ENCODE measurements at regions of chr20 and their contacts with region 1.

Region 1: DNA sequence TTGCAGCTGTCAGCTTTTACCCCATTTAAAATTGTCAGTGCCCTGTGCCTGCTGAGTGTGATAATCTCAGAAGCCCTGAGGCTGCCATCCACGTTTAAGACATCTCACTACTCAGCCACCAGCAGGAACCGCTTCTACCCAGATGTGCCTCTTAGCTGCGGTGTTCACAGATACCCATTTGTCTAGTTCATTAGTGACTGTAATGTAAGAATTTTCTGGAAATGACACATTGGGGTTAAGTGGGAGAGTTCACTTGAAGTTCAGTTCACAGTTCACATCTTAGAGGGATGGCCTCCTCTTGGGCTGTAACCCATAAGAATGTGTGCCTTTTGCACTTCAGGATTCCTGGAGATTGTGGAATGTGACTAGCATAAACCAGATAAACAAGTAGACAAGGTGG is 477.7 kb downstream of the BTBD3 start:
- DNase-seq: no peak
- ATAC-seq: no peak
- H3K4me3 ChIP-seq: no peak overlapping the region
- H3K27ac ChIP-seq: no peak overlapping the region
- H3K4me1 ChIP-seq: no peaks in the 10 kb centered on the region
- H3K27me3 ChIP-seq: no peaks in the 10 kb centered on the region
- CTCF ChIP-seq: no peak

Region 2: GRCh38 chr20:12737900-12738299 is 342.5 kb after region 1 on chr20:
- CTCF ChIA-PET with region 1: no interaction called
- POLR2A ChIA-PET with region 1: no interaction called
- in situ Hi-C with region 1: no loop called
- intact Hi-C with region 1: no loop called
- DNase-seq: no peak
- ATAC-seq: no peak
- H3K4me3 ChIP-seq: no peak overlapping the region
- H3K27ac ChIP-seq: no peak overlapping the region
- H3K4me1 ChIP-seq: no peaks in the 10 kb centered on the region
- H3K27me3 ChIP-seq: no peaks in the 10 kb centered on the region
- CTCF ChIP-seq: no peak

Region 3: GRCh38 chr20:12798286-12798685 is 402.9 kb after region 1 on chr20:
- CTCF ChIA-PET with region 1: interaction called, 10 read pairs
- POLR2A ChIA-PET with region 1: no interaction called
- in situ Hi-C with region 1: no loop called
- intact Hi-C with region 1: no loop called
- DNase-seq: no peak
- ATAC-seq: no peak
- H3K4me3 ChIP-seq: no peak overlapping the region
- H3K27ac ChIP-seq: no peak overlapping the region
- H3K4me1 ChIP-seq: no peaks in the 10 kb centered on the region
- H3K27me3 ChIP-seq: no peaks in the 10 kb centered on the region
- CTCF ChIP-seq: no peak